Activated CD4-positive, alpha-beta T cell treated with anti-CD3 and anti-CD28 coated beads for 36 hours (primary cell): ENCODE measurements at regions of chr4 and their contacts with region 1.

Region 1: DNA sequence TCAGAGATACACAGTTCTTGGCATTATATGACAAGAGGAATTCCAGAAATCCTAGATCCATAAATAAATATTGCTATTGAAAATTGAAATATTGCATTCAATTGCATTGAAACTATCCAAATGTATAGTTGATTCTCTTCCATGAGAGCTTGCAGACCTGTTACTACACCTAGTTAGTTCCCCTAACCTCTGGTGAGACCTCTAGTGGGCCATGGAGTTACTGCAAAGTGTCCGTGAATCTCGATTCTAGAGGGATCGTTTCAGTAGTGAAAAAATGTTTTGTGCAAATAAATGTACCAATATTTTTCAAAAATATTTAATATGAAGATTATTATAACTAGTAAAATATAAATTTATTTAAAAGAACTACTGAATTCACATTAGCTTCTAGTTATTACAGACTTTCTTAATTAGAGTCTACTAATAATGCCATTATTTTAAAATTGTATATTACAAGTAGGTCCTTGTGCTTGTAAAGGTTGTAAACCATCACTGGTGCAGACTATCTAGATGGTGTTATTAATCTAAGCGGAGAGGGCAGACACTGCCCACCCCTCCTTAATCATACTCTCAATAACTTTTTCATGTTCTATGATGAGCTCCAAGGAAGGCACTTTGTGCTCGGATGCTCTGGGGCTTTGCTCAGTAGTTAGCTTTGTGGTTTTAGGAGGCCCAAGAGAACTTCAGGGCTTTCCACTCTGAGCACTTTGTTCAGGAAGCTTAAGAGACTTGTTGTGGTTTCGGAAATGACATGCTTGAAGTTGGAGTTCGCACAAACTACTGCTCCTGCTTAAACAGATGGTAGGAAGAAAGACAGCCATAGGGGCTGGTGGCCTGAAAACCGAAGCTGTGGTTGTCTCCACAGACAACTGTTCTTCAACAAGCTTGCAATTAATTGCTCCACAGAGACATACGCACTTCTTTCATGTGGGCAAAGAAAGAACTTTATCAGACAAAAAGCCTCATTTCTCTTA is 42.8 kb downstream of the IL21 start:
- DNase-seq: peak; percentile 84
- ATAC-seq: peak; percentile 64
- H3K4me3 Mint-ChIP-seq: peak overlapping the region; percentile 68
- H3K27ac Mint-ChIP-seq: peak overlapping the region; percentile 96
- H3K4me1 Mint-ChIP-seq: peaks cover 64% of the 10 kb centered on the region
- H3K27me3 Mint-ChIP-seq: no peaks in the 10 kb centered on the region

Region 2: GRCh38 chr4:121736735-121737351 is 841.3 kb before region 1 on chr4:
- CTCF ChIA-PET with region 1: no interaction called
- POLR2A ChIA-PET with region 1: no interaction called
- intact Hi-C with region 1: no loop called
- DNase-seq: peak; percentile 35
- ATAC-seq: no peak
- H3K4me3 Mint-ChIP-seq: no peak overlapping the region
- H3K27ac Mint-ChIP-seq: no peak overlapping the region
- H3K4me1 Mint-ChIP-seq: no peaks in the 10 kb centered on the region
- H3K27me3 Mint-ChIP-seq: peaks cover 6% of the 10 kb centered on the region

Region 3: DNA sequence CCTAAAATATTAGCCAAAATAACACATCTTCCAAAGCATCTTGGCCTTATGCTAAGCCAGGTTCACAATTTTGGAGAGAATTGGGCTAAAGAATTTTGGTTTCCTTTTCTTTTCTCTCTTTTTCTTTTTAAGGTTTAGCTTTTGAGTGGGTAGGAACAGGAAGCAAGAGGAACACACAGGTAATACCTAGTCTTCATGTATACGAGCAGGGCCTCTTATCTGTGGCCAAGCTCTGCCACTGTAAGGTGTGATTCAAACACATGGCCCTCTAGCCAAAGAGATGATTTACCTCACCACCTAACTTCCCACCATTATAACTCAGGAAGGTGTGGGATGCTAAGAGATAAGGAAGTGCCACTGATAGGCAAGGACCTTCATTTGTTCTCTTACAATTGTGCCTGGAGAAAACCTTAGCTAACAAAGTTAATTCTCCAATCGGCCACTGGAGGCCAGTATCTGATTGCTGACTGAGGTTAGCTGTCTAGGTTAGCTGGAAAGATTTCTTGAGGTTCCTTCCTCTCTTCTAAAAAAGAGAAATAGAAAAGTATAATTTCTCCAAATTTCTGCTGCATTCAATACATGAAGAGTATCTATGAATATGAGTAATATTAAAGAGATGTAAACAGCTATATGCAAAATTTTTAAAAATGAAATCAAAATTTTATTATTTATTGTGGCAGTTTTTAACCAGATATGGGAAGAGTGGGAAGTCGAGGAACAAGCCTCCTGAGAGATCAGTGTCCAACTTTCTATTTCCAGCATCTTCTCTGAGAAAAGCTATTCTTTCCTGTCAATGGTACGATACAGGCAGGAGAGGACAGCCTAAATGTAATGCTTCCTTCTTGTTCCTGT is 677.7 kb before region 1 on chr4:
- CTCF ChIA-PET with region 1: interaction called, 22 read pairs
- POLR2A ChIA-PET with region 1: no interaction called
- intact Hi-C with region 1: loop called (anchors 1 to 2 kb)
- DNase-seq: peak; percentile 69
- ATAC-seq: peak; percentile 89
- H3K4me3 Mint-ChIP-seq: no peak overlapping the region
- H3K27ac Mint-ChIP-seq: no peak overlapping the region
- H3K4me1 Mint-ChIP-seq: peaks cover 8% of the 10 kb centered on the region
- H3K27me3 Mint-ChIP-seq: peaks cover 5% of the 10 kb centered on the region

Region 4: GRCh38 chr4:122205690-122206089 is 372.4 kb before region 1 on chr4:
- CTCF ChIA-PET with region 1: interaction called, 3 read pairs
- POLR2A ChIA-PET with region 1: no interaction called
- intact Hi-C with region 1: loop called in 1 of 2 experiments (anchors 5 kb)
- DNase-seq: no peak
- ATAC-seq: no peak
- H3K4me3 Mint-ChIP-seq: no peak overlapping the region
- H3K27ac Mint-ChIP-seq: no peak overlapping the region
- H3K4me1 Mint-ChIP-seq: no peaks in the 10 kb centered on the region
- H3K27me3 Mint-ChIP-seq: no peaks in the 10 kb centered on the region

Region 5: DNA sequence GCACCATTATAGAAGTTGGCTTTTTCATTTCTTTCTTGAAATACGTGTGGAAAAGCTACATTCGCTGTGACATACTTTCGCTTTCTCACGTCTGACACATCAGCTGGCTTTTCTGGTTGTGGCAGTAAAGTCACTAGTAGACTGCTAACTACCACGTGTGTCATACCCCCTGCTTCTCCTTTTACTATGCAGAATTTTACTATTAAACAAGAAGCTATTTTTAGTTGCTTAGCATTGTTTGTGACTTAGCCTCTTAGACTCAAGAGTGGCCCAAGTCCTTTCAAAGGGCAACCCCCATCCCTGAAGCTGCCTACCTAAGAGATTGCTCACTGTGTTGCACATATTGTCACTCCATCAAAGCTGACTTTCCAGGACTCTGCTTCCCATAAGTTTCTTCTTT is 119.5 kb before region 1 on chr4:
- CTCF ChIA-PET with region 1: interaction called, 32 read pairs
- POLR2A ChIA-PET with region 1: interaction called, 7 read pairs
- intact Hi-C with region 1: loop called (anchors 1 kb)
- DNase-seq: peak; percentile 74
- ATAC-seq: peak; percentile 86
- H3K4me3 Mint-ChIP-seq: peak overlapping the region; percentile 62
- H3K27ac Mint-ChIP-seq: peak overlapping the region; percentile 89
- H3K4me1 Mint-ChIP-seq: peaks cover 51% of the 10 kb centered on the region
- H3K27me3 Mint-ChIP-seq: no peaks in the 10 kb centered on the region

Region 6: DNA sequence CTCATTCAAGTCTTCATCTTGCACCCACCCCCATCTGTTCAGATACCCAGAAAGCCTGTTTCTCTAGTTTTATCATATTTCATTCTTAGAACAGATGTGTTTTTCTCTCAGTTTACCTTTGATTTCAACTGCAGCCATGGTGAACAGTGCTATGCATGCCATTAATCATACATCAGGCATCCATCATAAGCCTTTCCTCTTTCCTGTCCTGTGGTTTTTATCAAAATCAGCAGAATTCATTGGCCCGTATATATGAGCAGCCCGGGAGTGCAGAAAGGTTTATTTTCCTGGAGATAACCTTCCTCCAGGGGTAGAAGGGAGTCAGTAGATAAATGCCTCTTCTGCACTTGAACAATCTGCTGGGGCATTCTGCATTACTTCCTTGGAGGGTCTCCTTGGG is 22.9 kb before region 1 on chr4:
- CTCF ChIA-PET with region 1: interaction called, 20 read pairs
- POLR2A ChIA-PET with region 1: interaction called, 4 read pairs
- intact Hi-C with region 1: no loop called
- DNase-seq: no peak
- ATAC-seq: no peak
- H3K4me3 Mint-ChIP-seq: no peak overlapping the region
- H3K27ac Mint-ChIP-seq: peak overlapping the region; percentile 63
- H3K4me1 Mint-ChIP-seq: peaks cover 68% of the 10 kb centered on the region
- H3K27me3 Mint-ChIP-seq: no peaks in the 10 kb centered on the region

Region 7: DNA sequence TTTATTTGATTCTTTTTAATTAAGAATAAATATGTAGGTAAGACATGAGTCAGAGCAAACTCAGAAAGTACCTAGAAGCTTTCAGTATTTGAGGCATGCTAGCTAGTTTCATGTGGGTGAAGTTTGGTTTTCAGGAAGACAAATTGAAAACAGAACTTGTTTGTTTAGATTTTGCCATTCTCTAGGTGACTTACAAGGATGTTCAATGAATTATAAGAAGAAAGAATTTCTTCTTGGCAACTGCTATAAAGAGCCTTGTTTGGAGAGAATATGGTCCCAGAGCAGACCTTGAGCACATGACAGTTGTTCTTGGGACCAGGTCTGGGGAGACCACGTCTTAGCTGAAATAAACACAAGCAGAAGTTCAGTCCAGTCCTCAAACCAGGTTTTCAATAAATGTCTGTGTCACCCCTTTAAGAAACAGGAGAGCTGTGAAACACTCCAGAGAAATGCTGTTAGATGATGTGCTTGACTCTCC is 80.8 kb after region 1 on chr4:
- CTCF ChIA-PET with region 1: interaction called, 20 read pairs
- POLR2A ChIA-PET with region 1: interaction called, 3 read pairs
- intact Hi-C with region 1: no loop called
- DNase-seq: no peak
- ATAC-seq: peak; percentile 86
- H3K4me3 Mint-ChIP-seq: peak overlapping the region; percentile 42
- H3K27ac Mint-ChIP-seq: peak overlapping the region; percentile 98
- H3K4me1 Mint-ChIP-seq: peaks cover 61% of the 10 kb centered on the region
- H3K27me3 Mint-ChIP-seq: no peaks in the 10 kb centered on the region

Region 8: DNA sequence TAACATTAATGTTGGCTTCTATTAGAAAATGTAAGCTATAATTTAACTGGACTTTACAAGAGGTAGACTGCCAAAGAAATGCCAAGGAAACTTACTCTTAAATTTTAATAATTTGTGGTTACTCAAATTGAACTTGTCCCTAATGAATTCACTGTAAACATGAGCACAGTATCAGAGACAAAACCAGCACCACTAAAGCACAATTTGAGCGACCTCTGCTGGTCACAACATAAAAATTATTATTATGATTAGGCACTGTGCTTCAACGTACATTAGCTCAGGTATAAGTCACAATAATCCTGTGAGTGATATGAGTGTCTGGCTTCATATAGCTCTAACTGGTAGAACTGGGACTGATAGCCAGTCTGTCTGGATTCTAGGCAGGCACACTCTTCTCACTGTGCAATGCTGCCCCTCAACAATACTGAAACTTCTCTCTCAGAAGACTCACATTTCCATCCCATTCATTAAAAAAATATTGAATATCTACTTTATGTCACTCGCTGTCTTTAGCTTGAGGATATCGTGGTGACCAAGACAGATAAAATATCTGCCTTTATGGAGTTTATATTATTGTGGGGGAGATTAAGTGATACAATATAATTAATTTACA is 336.3 kb after region 1 on chr4:
- CTCF ChIA-PET with region 1: interaction called, 21 read pairs
- POLR2A ChIA-PET with region 1: no interaction called
- intact Hi-C with region 1: no loop called
- DNase-seq: peak; percentile 51
- ATAC-seq: peak; percentile 85
- H3K4me3 Mint-ChIP-seq: no peak overlapping the region
- H3K27ac Mint-ChIP-seq: no peak overlapping the region
- H3K4me1 Mint-ChIP-seq: no peaks in the 10 kb centered on the region
- H3K27me3 Mint-ChIP-seq: no peaks in the 10 kb centered on the region